Ascending aorta (tissue), 2 donors: ENCODE measurements at regions of chr7 and their contacts with region 1.

Region 1: GRCh38 chr7:151782598-151783448 is 94.1 kb downstream of the PRKAG2 start:
- DNase-seq: peak in 1 of 2 donors; percentile 83
- H3K4me3 ChIP-seq: peak overlapping the region; percentile 31 to 43
- H3K27ac ChIP-seq: no peak overlapping the region
- H3K4me1 ChIP-seq: peaks cover 0 to 9% of the 10 kb centered on the region in 2 donors
- H3K27me3 ChIP-seq: no peaks in the 10 kb centered on the region
- CTCF ChIP-seq: peak; percentile 82 to 87 (median 87)

Region 2: DNA sequence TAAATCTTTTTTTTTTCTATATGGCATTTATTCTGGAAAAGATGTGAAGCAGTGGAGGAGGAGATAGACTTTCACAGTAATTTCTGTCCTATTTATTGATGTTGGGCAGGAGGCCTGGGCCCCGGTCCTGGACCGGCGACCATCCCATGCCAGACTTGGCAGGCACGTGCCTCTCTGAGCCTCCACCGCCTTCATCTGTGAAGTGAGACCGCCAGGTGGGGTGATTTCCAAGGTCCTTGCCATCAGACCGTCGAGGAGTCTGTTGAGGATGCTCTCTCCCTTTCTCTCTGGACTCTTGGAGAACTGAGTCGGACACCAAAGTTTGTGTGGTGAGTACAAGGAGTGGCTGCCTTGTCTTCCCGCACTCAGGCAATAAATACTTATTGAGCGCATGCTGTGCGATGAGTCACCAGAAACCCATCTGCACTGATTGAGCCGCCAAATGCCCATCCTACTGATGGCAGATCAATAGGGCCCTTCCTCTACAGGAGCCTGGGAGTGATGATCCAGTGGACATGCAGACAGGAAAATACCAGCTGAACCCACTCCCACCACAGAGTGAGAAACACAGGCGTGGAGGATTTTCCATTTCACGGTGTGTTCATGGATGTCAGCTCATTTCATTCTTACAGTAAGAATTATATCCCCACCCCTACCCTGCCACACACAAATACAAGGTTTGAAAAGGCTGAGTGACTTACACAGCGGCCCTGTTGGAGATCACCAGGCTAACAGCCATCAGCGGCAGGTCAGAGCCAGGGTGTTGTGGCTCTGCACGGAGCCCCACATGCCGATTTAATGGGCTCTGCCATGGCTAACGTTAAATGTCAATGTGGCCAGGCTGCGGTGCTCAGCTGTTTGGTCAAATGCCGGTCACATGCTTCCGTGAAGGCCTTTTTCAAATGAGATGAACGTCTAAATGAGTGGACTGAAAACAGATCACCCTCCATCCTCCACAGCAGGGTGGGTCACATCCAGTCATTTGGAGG is 105.5 kb after region 1 on chr7:
- intact Hi-C with region 1: no loop called
- DNase-seq: peak in 1 of 2 donors; percentile 43
- H3K4me3 ChIP-seq: no peak overlapping the region
- H3K27ac ChIP-seq: no peak overlapping the region
- H3K4me1 ChIP-seq: no peaks in the 10 kb centered on the region
- H3K27me3 ChIP-seq: no peaks in the 10 kb centered on the region
- CTCF ChIP-seq: no peak

Region 3: DNA sequence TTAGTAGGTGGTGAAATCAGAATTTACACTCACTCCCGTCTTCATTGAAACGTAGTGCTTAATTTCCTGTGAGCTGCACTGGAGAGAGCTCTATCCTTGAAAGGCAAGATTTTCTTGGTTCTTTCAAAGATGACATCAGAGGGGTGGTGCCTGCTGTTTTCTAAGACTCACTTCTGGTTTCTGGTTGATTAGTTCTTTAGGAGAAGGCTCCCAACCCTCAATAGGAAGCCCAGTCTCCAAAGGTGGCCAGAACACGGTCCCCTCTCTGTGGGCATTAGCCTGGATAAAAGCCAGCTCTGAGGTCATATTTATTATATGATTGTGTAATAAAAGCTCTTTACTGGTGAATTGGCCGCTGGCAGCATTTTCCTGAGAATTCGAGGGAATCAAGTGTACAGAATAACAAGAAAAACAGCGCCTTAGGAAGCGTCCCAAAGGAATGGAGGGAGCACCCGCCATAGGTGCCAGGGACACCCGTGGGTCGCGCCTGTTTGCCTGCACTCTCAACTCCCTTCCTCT is 149.6 kb after region 1 on chr7:
- intact Hi-C with region 1: loop called (anchors 5 kb)
- DNase-seq: peak in 1 of 2 donors; percentile 66
- H3K4me3 ChIP-seq: no peak overlapping the region
- H3K27ac ChIP-seq: no peak overlapping the region
- H3K4me1 ChIP-seq: no peaks in the 10 kb centered on the region
- H3K27me3 ChIP-seq: no peaks in the 10 kb centered on the region
- CTCF ChIP-seq: no peak

Region 4: DNA sequence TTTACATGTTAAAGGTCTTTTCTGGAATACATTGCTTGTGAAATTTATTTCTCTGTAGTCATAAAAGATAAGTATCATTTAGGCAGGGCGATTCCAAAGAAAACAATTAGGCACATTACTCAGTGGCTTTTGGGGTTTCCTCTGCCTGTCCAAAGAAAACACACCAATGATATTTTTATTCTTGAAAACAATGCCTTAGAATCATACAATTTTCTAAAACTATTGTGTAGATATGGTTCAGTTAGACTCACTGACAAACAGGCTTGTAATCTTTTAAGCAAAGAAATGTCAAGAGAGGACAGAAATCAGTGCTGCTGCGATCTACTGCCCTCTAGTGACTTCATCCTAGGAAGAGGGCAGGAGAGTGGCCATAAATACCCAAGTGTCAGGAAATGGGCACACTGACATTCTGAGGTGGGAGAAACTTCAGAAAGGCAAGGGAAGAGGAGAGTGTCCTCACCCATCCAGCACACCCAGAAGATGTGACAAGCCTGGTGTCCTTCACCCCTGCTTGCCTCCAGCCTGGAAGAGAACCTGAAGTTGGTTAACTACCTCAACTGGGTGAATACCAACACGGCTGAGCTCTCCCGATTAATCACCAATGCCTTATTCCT is 363.1 kb after region 1 on chr7:
- intact Hi-C with region 1: loop called (anchors 2 kb)
- DNase-seq: no peak
- H3K4me3 ChIP-seq: no peak overlapping the region
- H3K27ac ChIP-seq: peak overlapping the region in 1 of 2 donors; percentile 12
- H3K4me1 ChIP-seq: peaks cover 0 to 15% of the 10 kb centered on the region in 2 donors
- H3K27me3 ChIP-seq: no peaks in the 10 kb centered on the region
- CTCF ChIP-seq: peak; percentile 28 to 64 (median 52)